Dorsolateral prefrontal cortex (tissue), 120 donors: ENCODE measurements at regions of chr17 and their contacts with region 1.

Region 1: DNA sequence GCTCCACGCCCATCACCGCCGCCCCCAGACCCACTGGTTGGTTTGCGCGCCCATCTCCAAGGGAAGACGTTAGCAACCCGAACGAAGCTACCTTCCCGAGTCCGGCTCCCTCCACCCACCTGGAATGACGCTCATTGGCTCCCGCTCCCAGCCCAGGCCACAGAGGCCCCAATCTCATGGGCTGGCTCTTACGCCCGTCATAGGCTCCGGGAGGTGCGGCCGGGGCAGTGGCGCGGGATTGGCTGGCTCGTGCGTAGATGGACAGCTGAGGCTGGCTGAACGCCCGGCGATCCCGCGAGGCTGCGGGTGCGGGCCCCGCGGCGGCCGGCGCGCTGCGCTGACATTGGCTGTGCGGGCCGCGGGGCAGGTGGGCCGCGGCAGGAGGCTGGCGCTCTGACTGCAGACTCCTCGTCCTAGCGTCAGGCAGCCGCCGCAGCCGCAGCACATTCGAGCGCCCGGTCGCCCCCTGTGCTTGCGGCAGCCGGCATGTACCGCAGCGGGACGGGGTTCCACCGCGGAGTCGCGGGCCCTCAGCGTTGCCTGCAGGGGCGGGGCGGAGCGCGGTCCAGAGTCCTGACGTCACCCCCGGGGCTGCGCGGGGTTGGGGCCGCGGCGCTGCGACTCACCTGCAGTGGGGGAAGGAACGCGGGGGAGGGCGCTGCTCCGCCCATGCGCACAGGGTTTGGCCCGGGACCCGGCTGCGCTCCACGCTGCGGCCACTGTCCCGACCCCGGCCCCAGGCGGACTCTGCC is 453 bp upstream of the MYH10 start:
- DNase-seq: peak; percentile 99 to 100 (median 99)
- H3K4me3 ChIP-seq: peak overlapping the region; percentile 68 to 98 (median 92)
- H3K27ac ChIP-seq: peak overlapping the region in 55 of 59 donors; percentile 43 to 93 (median 85)
- H3K27me3 ChIP-seq: no peaks in the 10 kb centered on the region
- CTCF ChIP-seq: peak in 20 of 56 donors; percentile 4 to 46 (median 14)

Region 2: DNA sequence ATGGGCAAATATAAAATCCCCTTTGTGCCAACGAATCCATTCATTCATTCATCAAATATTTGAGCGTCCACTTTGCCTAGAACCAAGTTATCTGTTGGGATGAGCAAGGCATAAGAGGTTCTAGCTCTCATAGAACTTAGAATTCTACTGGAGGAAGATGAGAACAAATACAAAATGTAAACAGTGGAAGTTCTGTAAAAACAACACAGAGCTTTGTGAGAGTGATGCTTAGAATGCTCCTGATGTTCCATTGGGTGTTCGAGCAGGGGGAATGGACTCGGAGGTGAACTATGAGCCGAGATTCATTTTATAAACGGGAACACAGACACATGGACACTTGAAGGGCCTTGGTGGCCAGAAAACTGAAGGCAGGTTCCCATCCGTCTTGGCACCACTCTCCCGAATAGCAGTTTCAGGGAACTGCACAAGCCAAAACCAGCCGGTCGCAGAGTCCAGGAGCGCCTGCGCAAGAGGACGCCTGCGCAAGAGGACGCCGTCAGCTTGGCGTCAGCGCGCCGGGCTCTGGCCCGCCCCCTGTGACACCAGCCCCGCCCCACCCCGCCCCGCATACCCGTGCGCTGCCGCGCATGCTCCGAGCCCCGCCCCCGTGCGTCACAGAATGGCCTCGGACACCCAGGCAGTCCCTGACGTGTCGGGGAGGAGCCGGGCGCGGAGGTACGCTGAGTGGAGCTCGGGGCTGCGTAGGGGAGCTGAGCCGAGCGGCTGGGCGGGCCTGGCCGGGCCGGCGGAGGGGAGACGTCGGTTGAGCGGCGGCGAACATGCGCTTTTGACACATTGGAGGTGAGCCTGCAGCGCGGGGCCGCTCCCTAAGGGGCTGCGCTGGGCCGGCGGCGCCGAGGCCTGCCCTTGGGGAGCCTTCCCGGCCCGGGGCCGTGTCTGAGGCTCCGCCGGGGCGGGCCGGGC is 195.5 kb before region 1 on chr17 and contains the start of gene NDEL1:
- intact Hi-C with region 1: loop called (anchors 1 to 5 kb)
- DNase-seq: peak; percentile 96 to 100 (median 99)
- H3K4me3 ChIP-seq: peak within 1 kb of the TSS; percentile 72 to 100 (median 96)
- H3K27ac ChIP-seq: peak within 1 kb of the TSS; percentile 83 to 100 (median 96)
- H3K27me3 ChIP-seq: no peaks in the 10 kb centered on the region
- CTCF ChIP-seq: peak in 31 of 56 donors; percentile 2 to 56 (median 30)
- total RNA-seq, gene NDEL1: 51.0 to 118 (median 91.4) TPM

Region 3: DNA sequence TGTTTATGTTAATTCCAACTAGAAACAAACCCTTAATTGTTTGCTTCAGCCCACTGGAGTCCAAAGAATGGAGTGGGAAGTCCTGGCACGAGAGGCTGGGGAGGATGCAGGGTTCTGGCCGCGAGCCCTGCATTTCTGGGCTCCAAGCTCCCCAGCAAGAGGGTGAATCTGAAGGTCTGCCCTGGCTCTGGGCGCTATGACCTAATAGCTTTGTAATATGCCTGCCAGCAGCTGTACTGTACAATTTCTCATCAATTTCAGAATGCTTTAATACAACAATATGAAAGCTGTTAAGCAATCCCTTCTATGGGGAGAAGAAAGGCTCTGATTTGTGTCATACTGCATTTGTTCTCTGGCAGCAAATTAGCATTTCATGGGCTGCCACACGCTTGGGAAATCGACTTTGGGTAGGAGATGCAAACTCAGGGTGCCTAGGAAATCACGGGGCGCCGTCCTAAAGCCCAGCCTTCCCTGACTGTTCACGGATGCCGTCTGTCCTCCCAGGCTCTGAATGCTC is 151.5 kb before region 1 on chr17:
- intact Hi-C with region 1: loop called in 1 of 2 experiments (anchors 5 kb)
- DNase-seq: peak; percentile 62 to 84 (median 76)
- H3K4me3 ChIP-seq: peak overlapping the region in 22 of 59 donors; percentile 0 to 50 (median 16)
- H3K27ac ChIP-seq: peak overlapping the region in 57 of 59 donors; percentile 3 to 81 (median 67)
- H3K27me3 ChIP-seq: no peaks in the 10 kb centered on the region
- CTCF ChIP-seq: peak in 12 of 56 donors; percentile 6 to 35 (median 12)

Region 4: DNA sequence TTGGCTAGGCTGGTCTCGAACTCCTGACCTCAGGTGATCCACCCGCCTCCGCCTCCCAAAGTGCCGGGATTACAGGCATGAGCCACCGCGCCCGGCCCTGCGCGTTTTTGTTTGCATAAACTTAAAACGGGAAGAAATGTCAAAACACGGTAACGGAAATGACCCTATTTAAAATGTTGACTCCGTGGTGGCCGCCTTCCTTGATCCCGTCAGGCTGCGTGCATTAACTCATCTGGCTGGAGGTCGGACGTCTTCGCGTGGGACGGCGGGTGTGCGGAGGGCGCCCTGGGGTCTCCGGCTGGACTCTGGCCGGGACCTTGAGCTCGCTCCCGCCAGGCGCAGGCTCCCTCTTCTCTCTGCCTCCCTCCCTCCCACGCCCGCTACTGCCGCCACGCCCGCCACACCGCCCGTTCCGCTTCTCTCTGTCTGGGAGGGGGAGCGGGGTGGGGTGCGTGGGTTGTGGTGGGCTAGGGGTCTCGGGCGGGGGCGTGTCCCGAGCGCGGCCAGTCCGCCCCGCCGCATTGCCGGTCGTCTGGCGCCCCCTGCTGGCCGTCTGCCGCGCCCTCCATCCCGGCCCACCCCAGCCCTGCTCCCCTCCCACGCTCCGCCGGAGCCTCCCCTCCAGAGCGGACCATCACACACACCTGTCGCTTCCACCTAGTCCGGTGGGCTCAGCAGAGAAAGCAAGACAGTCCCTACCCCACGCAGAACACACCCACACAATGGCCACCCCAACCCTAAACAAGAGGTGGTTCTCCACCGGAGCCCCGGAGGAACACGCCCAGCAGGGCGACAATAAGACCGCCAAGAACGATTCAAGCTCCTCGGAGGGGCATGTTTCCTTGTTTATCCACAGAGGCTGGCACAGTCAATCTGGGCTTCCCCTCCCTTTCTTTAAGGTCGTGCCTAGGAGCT is 114.9 kb after region 1 on chr17:
- intact Hi-C with region 1: loop called (anchors 10 kb)
- DNase-seq: peak in 8 of 10 donors; percentile 24 to 76 (median 64)
- H3K4me3 ChIP-seq: peak overlapping the region; percentile 45 to 82 (median 70)
- H3K27ac ChIP-seq: peak overlapping the region in 9 of 59 donors; percentile 6 to 75 (median 45)
- H3K27me3 ChIP-seq: peaks cover 0 to 8% (median 0%) of the 10 kb centered on the region in 45 donors
- CTCF ChIP-seq: peak; percentile 80 to 99 (median 94)